ENCODE measurements at regions of chr22 and their contacts with region 1.

Region 1: GRCh38 chr22:25465949-25466348 is 98.5 kb upstream of the GRK3 start:
- DNase-seq: no peak
- ATAC-seq: no peak
- H3K4me3 ChIP-seq: no peak overlapping the region
- H3K27ac ChIP-seq: no peak overlapping the region
- H3K4me1 ChIP-seq: no peaks in the 10 kb centered on the region
- H3K27me3 ChIP-seq: no peaks in the 10 kb centered on the region
- CTCF ChIP-seq: no peak
- POLR2A ChIP-seq: no peak

Region 2: DNA sequence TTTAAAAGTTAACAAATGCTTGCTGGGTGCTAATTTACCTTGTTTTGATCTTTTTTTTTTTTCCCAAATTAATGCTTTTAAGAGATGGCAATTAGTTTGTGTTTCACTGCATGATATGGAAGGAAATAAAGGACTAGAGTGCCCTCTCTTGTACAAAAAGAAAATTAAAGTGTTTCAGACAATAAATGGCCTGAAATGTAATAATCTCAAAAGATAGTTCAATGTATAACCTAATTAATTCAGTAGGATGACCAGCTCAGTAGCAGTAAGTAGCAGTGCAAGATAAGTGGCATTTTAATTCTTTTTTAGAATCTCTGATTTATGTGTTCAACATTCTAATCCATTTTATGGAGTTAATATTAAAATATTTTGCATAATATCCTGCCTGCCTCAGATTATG is 236.1 kb after region 1 on chr22:
- intact Hi-C with region 1: loop called in 1 of 2 experiments (anchors 10 kb)
- DNase-seq: no peak
- ATAC-seq: peak; percentile 31 to 52 (median 40)
- H3K4me3 ChIP-seq: no peak overlapping the region
- H3K27ac ChIP-seq: no peak overlapping the region
- H3K4me1 ChIP-seq: no peaks in the 10 kb centered on the region
- H3K27me3 ChIP-seq: no peaks in the 10 kb centered on the region
- CTCF ChIP-seq: peak; percentile 30 to 60 (median 51)
- POLR2A ChIP-seq: no peak